ENCODE measurements at regions of chr6 and their contacts with region 1.

Region 1: GRCh38 chr6:153032255-153032882 is 29.9 kb upstream of the MTRF1L start:
- DNase-seq: no peak
- ATAC-seq: no peak
- H3K4me3 ChIP-seq: no peak overlapping the region
- H3K27ac ChIP-seq: no peak overlapping the region
- H3K4me1 ChIP-seq: no peaks in the 10 kb centered on the region
- H3K27me3 ChIP-seq: no peaks in the 10 kb centered on the region
- CTCF ChIP-seq: peak; percentile 10 to 58 (median 43)
- POLR2A ChIP-seq: no peak

Region 2: GRCh38 chr6:152736687-152737273 is 295.6 kb before region 1 on chr6:
- intact Hi-C with region 1: no loop called
- DNase-seq: no peak
- ATAC-seq: no peak
- H3K4me3 ChIP-seq: no peak overlapping the region
- H3K27ac ChIP-seq: no peak overlapping the region
- H3K4me1 ChIP-seq: no peaks in the 10 kb centered on the region
- H3K27me3 ChIP-seq: no peaks in the 10 kb centered on the region
- CTCF ChIP-seq: no peak
- POLR2A ChIP-seq: no peak

Region 3: GRCh38 chr6:153108315-153108714 is 75.9 kb after region 1 on chr6:
- intact Hi-C with region 1: loop called in 2 of 10 experiments (anchors 2 to 10 kb)
- DNase-seq: no peak
- ATAC-seq: no peak
- H3K4me3 ChIP-seq: no peak overlapping the region
- H3K27ac ChIP-seq: no peak overlapping the region
- H3K4me1 ChIP-seq: peaks cover 0 to 14% (median under 1%) of the 10 kb centered on the region in 12 donors
- H3K27me3 ChIP-seq: no peaks in the 10 kb centered on the region
- CTCF ChIP-seq: peak in 6 of 12 donors; percentile 13 to 34 (median 22)
- POLR2A ChIP-seq: no peak

Region 4: DNA sequence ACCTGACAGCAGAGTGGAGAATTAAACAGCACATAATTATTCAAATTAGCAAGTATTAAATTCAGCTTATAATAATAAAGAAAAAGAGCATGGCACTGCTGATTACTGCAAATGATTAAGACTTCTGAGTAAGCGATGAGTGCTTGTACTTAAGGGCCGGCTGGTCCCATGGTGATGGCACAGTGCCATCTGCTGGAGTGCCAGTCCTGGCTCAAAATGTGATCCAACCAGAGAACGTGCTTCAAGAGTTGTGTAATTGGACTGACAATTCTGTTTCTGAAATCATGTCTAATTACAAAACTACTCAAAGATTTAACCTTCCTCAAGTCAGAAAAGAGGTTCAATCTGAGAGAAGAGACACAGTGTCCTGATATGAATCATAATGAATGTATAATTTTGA is 280.3 kb after region 1 on chr6:
- intact Hi-C with region 1: loop called in 1 of 10 experiments (anchors 5 kb)
- DNase-seq: peak in 2 of 5 donors; percentile 33 to 44
- ATAC-seq: peak in 1 of 4 donors; percentile 43
- H3K4me3 ChIP-seq: no peak overlapping the region
- H3K27ac ChIP-seq: no peak overlapping the region
- H3K4me1 ChIP-seq: no peaks in the 10 kb centered on the region
- H3K27me3 ChIP-seq: no peaks in the 10 kb centered on the region
- CTCF ChIP-seq: peak in 2 of 12 donors; percentile 8 to 28
- POLR2A ChIP-seq: no peak

Region 5: GRCh38 chr6:153503810-153504209 is 471.4 kb after region 1 on chr6:
- intact Hi-C with region 1: loop called in 2 of 10 experiments (anchors 5 to 10 kb)
- DNase-seq: no peak
- ATAC-seq: no peak
- H3K4me3 ChIP-seq: no peak overlapping the region
- H3K27ac ChIP-seq: no peak overlapping the region
- H3K4me1 ChIP-seq: no peaks in the 10 kb centered on the region
- H3K27me3 ChIP-seq: no peaks in the 10 kb centered on the region
- CTCF ChIP-seq: no peak
- POLR2A ChIP-seq: no peak

Region 6: GRCh38 chr6:153511896-153512496 is 479.6 kb after region 1 on chr6:
- intact Hi-C with region 1: loop called in 9 of 10 experiments (anchors 5 to 10 kb)
- DNase-seq: no peak
- ATAC-seq: peak in 2 of 4 donors; percentile 16 to 43
- H3K4me3 ChIP-seq: no peak overlapping the region
- H3K27ac ChIP-seq: no peak overlapping the region
- H3K4me1 ChIP-seq: no peaks in the 10 kb centered on the region
- H3K27me3 ChIP-seq: no peaks in the 10 kb centered on the region
- CTCF ChIP-seq: peak; percentile 50 to 72 (median 62)
- POLR2A ChIP-seq: no peak

Region 7: DNA sequence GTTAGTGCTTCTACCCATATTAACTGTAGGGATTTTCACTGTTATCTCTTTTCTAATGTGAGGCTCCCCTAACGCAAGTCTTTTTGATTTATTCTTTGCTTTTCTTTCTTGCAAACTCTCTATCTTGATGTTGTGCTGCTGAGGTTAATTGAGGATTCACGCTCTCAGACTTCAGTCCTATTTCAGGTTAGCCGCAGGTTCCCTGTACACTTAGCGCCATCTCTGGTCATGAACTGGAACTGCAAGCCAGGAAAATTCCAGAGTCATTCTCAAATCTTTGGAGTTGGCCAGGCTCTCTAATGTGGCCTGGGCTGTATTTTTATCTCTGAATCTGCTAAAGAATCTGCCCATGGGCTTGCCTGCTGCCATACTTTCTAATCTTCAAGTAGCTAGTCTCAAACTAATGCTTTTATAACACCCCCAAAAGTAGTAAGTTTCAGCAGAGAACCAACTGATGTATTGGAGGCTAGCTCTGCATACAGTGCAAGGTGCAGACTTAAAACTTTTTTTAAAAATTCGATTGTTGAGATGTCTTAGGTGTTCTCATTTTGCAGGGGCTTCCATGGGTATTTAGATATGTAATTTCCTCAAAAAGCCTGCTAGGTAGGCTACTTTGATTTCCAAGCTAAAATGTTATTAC is 915.6 kb after region 1 on chr6:
- intact Hi-C with region 1: loop called in 1 of 10 experiments (anchors 10 kb)
- DNase-seq: peak in 1 of 5 donors; percentile 6
- ATAC-seq: no peak
- H3K4me3 ChIP-seq: no peak overlapping the region
- H3K27ac ChIP-seq: no peak overlapping the region
- H3K4me1 ChIP-seq: no peaks in the 10 kb centered on the region
- H3K27me3 ChIP-seq: no peaks in the 10 kb centered on the region
- CTCF ChIP-seq: peak; percentile 53 to 91 (median 77)
- POLR2A ChIP-seq: no peak

Measured in heart left ventricle (tissue), 16 donors.